K562 (cell line): ENCODE measurements at regions of chr5 and their contacts with region 1.

Region 1: DNA sequence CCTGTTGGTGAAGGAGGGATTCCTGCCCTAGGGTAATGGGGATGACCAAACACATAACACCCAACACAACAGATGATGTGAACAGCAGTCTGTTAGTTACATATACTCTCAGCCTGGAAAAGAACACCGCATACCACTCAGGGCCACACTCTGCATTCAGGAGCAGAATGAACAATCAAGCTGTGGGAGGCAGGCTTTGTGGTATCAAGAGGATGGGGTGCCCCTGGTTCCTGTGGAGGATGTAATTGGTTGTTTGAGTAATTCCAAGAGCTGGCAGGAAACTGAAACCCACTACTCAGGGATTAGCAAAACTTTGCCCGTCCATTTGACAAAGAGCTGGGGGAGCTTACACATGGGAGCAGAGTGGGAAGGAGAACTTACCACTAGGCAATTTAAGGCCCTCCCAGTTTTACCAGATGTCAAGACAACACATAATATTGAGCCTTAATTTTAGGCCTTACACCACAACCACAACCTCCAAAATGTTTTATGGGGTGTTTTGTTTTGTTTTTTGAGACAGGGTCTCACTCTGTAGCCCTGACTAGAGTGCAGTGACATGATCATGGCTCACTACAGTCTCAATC is 15.6 kb upstream of the PRKAA1 start:
- DNase-seq: no peak
- ATAC-seq: peak; percentile 28; the same call in 2 of the 3 replicates
- H3K4me3 ChIP-seq: no peak overlapping the region
- H3K27ac ChIP-seq: no peak overlapping the region
- H3K4me1 ChIP-seq: peaks cover 4 to 11% of the 10 kb centered on the region in 2 experiments
- H3K27me3 ChIP-seq: no peaks in the 10 kb centered on the region
- CTCF ChIP-seq: no peak
- EP300 ChIP-seq: no peak
- POLR2A ChIP-seq: no peak
- RAD21 ChIP-seq: no peak

Region 2: GRCh38 chr5:40798012-40798855 is 15.6 kb before region 1 on chr5 and contains the start of gene PRKAA1:
- CTCF ChIA-PET with region 1: no interaction called
- POLR2A ChIA-PET with region 1: interaction called, 17 read pairs
- in situ Hi-C with region 1: no loop called
- intact Hi-C with region 1: no loop called
- DNase-seq: peak; percentile 94 to 96 (median 95)
- ATAC-seq: peak; percentile 85
- H3K4me3 ChIP-seq: peak within 1 kb of the TSS; percentile 94
- H3K27ac ChIP-seq: peak within 1 kb of the TSS; percentile 92
- H3K4me1 ChIP-seq: peaks cover 26 to 35% of the 10 kb centered on the region in 2 experiments
- H3K27me3 ChIP-seq: no peaks in the 10 kb centered on the region
- CTCF ChIP-seq: peak; percentile 53 to 85 (median 72); a peak in 5 of 6 replicates
- EP300 ChIP-seq: no peak; the same call in 1 of the 2 replicates
- POLR2A ChIP-seq: peak; percentile 93
- RAD21 ChIP-seq: peak in 1 of 2 experiments; percentile 48; a peak in 2 of 4 replicates
- polyA plus RNA-seq, gene PRKAA1: 24.5 to 37.3 TPM

Region 3: DNA sequence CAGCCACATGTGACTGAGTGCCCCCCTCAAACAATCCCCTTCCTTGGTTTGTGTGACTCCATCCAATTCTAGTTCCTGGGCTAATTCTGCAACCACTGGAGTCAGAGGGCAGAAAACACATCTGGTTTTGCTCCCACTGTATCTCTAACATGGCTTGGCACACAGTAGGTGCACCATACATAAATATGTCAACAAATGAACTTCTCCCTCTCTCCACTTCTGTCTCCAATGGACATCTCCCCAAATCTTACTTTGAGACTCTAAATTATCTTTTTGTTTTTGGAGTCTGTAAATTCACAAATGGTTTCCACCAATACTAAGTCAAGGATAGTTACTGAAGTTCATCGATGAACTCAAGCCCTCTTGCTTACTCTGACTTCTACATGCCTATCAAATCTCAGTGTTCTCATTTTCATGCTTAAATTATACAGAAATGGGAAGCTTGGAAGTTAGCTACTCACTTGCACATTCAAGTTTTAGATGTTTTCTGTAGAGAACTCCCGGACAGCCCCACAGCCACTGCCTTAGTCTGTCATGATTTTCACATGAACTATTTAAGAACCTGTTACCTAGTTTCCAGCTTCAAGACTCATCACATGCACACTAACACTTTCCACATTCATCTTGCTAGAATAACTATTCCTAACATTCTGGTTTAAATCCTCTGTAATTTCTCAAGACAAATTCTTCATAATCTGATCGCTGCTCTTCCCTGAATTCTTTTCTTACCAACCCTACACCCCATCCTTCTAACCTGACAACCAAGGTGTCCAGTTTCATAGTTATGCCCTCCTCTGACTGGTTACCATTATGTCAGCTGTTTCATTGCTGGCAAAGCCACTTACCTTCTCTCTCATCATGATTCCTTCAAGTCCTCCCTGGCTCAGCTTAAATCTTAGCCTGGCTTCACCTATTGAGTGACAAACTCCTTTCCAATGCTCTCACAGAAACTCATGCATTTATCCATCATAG is 15.2 kb after region 1 on chr5:
- CTCF ChIA-PET with region 1: no interaction called
- POLR2A ChIA-PET with region 1: interaction called, 88 read pairs
- in situ Hi-C with region 1: no loop called
- intact Hi-C with region 1: no loop called
- DNase-seq: no peak
- ATAC-seq: peak; percentile 2; the same call in 2 of the 3 replicates
- H3K4me3 ChIP-seq: no peak overlapping the region
- H3K27ac ChIP-seq: peak overlapping the region; percentile 4; the same call in 1 of the 3 replicates
- H3K4me1 ChIP-seq: peaks cover 6 to 28% of the 10 kb centered on the region in 2 experiments; a peak in 4 of 5 replicates
- H3K27me3 ChIP-seq: no peaks in the 10 kb centered on the region
- CTCF ChIP-seq: no peak
- EP300 ChIP-seq: no peak
- POLR2A ChIP-seq: peak; percentile 87
- RAD21 ChIP-seq: no peak